H1 (cell line): ENCODE measurements at regions of chr17 and their contacts with region 1.

Region 1: DNA sequence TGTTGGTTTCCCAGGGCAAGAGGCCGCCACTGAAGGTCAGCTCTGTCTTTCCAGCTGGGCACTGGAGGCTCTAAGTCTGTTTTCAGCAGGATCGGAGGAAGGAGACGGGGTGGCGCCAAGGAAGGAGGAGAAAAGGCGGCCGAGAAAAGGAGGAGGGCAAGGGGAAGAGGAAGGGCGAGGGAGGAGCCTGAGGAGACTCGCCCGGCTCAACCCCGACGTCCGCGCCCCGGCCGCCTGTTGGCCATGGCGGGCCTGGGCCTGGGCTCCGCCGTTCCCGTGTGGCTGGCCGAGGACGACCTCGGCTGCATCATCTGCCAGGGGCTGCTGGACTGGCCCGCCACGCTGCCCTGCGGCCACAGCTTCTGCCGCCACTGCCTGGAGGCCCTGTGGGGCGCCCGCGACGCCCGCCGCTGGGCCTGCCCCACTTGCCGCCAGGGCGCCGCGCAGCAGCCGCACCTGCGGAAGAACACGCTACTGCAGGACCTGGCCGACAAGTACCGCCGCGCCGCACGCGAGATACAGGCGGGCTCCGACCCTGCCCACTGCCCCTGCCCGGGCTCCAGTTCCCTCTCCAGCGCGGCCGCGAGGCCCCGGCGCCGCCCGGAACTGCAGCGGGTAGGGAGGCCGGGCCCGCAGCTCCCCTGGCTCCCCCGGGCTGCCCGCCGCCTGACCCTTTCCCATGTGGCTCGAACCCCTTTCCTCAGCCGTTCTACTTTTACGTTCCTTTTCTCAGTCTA is at the start of gene RNF135:
- DNase-seq: peak; percentile 53 to 85
- H3K4me3 ChIP-seq: peak within 1 kb of the TSS; percentile 65 to 75 (median 71)
- H3K27ac ChIP-seq: peak within 1 kb of the TSS; percentile 80
- H3K4me1 ChIP-seq: no peaks in the 10 kb centered on the region
- H3K27me3 ChIP-seq: no peaks in the 10 kb centered on the region; a peak in 1 of 7 replicates
- CTCF ChIP-seq: peak in 2 of 3 experiments; percentile 7 to 24; a peak in 3 of 4 replicates
- EP300 ChIP-seq: no peak
- POLR2A ChIP-seq: peak; percentile 75 to 81
- RAD21 ChIP-seq: no peak; a peak in 1 of 4 replicates
- total RNA-seq, gene RNF135: 9.0 and 10.3 TPM in 2 replicates

Region 2: DNA sequence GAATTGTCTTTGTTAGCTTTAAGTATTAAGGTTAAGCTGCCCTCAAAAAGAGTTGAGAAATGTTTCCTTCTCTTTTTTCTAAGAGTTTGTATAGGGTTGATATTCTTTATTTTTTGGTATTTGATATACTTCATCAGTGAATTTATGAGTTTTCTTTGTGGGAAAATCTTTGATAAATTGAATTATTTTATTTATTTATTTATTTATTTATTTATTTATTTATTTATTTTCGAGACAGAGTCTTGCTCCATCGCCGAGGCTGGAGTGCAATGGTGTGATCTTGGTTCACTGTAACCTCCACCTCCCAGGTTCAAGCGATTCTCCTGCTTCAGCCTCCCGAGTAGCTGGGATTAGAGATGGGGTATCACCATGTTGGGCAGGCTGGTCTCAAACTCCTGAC is 84.8 kb before region 1 on chr17:
- CTCF ChIA-PET with region 1: no interaction called
- POLR2A ChIA-PET with region 1: no interaction called
- DNase-seq: no peak
- H3K4me3 ChIP-seq: no peak overlapping the region
- H3K27ac ChIP-seq: no peak overlapping the region
- H3K4me1 ChIP-seq: no peaks in the 10 kb centered on the region
- H3K27me3 ChIP-seq: no peaks in the 10 kb centered on the region
- CTCF ChIP-seq: no peak
- EP300 ChIP-seq: no peak
- POLR2A ChIP-seq: no peak
- RAD21 ChIP-seq: no peak

Region 3: GRCh38 chr17:30942308-30943079 is 28.5 kb before region 1 on chr17:
- CTCF ChIA-PET with region 1: no interaction called
- POLR2A ChIA-PET with region 1: no interaction called
- DNase-seq: no peak
- H3K4me3 ChIP-seq: no peak overlapping the region
- H3K27ac ChIP-seq: no peak overlapping the region
- H3K4me1 ChIP-seq: no peaks in the 10 kb centered on the region
- H3K27me3 ChIP-seq: no peaks in the 10 kb centered on the region
- CTCF ChIP-seq: no peak
- EP300 ChIP-seq: no peak
- POLR2A ChIP-seq: no peak
- RAD21 ChIP-seq: no peak

Region 4: GRCh38 chr17:30956764-30957374 is 14.1 kb before region 1 on chr17:
- CTCF ChIA-PET with region 1: no interaction called
- POLR2A ChIA-PET with region 1: interaction called, 16 read pairs
- DNase-seq: no peak
- H3K4me3 ChIP-seq: no peak overlapping the region
- H3K27ac ChIP-seq: no peak overlapping the region
- H3K4me1 ChIP-seq: peaks cover 0 to 3% (median 0%) of the 10 kb centered on the region in 4 experiments; a peak in 3 of 7 replicates
- H3K27me3 ChIP-seq: no peaks in the 10 kb centered on the region; a peak in 1 of 7 replicates
- CTCF ChIP-seq: peak in 1 of 3 experiments; percentile 7; a peak in 1 of 4 replicates
- EP300 ChIP-seq: no peak
- POLR2A ChIP-seq: no peak
- RAD21 ChIP-seq: 0 out of 4 replicates have a peak, but pooled peaks of 1 of the 2 experiments have one; percentile 7

Region 5: GRCh38 chr17:31008374-31009041 is 37.5 kb after region 1 on chr17:
- CTCF ChIA-PET with region 1: no interaction called
- POLR2A ChIA-PET with region 1: interaction called, 15 read pairs
- DNase-seq: peak; percentile 9 to 87
- H3K4me3 ChIP-seq: peak overlapping the region; percentile 59 to 71 (median 66)
- H3K27ac ChIP-seq: no peak overlapping the region
- H3K4me1 ChIP-seq: no peaks in the 10 kb centered on the region
- H3K27me3 ChIP-seq: peaks cover 0 to 7% (median 6%) of the 10 kb centered on the region in 4 experiments; a peak in 5 of 7 replicates
- CTCF ChIP-seq: no peak
- EP300 ChIP-seq: no peak
- POLR2A ChIP-seq: peak in 1 of 2 experiments; percentile 45; a peak in 1 of 3 replicates
- RAD21 ChIP-seq: peak in 1 of 2 experiments; percentile 4; a peak in 1 of 4 replicates